Psoas muscle (tissue), 8 donors: ENCODE measurements at regions of chr11 and their contacts with region 1.

Region 1: GRCh38 chr11:19076744-19077589 is 16.4 kb upstream of the MRGPRX2 start:
- DNase-seq: peak; percentile 41 to 61
- ATAC-seq: peak in 3 of 4 donors; percentile 66 to 85 (median 77)
- H3K4me3 ChIP-seq: no peak overlapping the region
- H3K27ac ChIP-seq: no peak overlapping the region
- H3K4me1 ChIP-seq: no peaks in the 10 kb centered on the region
- H3K27me3 ChIP-seq: no peaks in the 10 kb centered on the region
- CTCF ChIP-seq: peak; percentile 98

Region 2: GRCh38 chr11:19110280-19110679 is 33.3 kb after region 1 on chr11:
- intact Hi-C with region 1: loop called in 1 of 2 experiments (anchors 2 kb)
- DNase-seq: peak; percentile 46 to 78
- ATAC-seq: peak; percentile 84 to 99 (median 93)
- H3K4me3 ChIP-seq: no peak overlapping the region
- H3K27ac ChIP-seq: peak overlapping the region; percentile 7
- H3K4me1 ChIP-seq: no peaks in the 10 kb centered on the region
- H3K27me3 ChIP-seq: no peaks in the 10 kb centered on the region
- CTCF ChIP-seq: no peak